ENCODE measurements at regions of chr16 and their contacts with region 1.

Region 1: DNA sequence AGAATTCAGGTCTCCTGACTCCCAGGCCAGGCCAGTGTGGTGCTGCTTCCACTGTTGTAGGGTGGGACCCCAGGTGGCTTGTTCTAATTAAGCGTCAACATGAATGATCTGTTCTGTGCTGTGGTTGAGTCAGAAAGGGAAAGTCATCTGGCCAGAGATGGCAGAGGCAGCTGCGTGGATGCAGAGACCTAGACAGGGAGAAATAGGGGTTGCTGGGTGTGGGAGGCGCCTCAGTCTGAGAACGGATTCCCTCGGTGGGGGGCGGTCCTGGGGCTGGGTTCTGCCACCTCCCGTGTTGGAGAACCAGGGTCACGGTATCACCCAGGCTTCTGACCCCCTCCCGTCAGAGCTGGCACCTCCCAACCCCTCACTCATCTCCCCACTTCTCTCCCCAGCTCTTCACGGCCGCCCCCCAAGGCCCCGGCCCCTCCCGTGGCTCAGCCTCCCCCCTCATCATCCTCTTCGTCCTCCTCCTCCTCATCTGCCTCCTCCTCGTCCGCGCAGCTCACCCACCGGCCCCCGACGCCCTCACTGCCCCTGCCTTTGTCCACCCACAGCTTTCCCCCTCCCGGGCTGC is 5.7 kb downstream of the FBRS start:
- DNase-seq: no peak
- ATAC-seq: no peak
- H3K4me3 ChIP-seq: no peak overlapping the region
- H3K27ac ChIP-seq: no peak overlapping the region
- H3K4me1 ChIP-seq: peaks cover 0 to 40% (median 34%) of the 10 kb centered on the region in 12 donors
- H3K27me3 ChIP-seq: no peaks in the 10 kb centered on the region
- CTCF ChIP-seq: no peak
- POLR2A ChIP-seq: no peak

Region 2: DNA sequence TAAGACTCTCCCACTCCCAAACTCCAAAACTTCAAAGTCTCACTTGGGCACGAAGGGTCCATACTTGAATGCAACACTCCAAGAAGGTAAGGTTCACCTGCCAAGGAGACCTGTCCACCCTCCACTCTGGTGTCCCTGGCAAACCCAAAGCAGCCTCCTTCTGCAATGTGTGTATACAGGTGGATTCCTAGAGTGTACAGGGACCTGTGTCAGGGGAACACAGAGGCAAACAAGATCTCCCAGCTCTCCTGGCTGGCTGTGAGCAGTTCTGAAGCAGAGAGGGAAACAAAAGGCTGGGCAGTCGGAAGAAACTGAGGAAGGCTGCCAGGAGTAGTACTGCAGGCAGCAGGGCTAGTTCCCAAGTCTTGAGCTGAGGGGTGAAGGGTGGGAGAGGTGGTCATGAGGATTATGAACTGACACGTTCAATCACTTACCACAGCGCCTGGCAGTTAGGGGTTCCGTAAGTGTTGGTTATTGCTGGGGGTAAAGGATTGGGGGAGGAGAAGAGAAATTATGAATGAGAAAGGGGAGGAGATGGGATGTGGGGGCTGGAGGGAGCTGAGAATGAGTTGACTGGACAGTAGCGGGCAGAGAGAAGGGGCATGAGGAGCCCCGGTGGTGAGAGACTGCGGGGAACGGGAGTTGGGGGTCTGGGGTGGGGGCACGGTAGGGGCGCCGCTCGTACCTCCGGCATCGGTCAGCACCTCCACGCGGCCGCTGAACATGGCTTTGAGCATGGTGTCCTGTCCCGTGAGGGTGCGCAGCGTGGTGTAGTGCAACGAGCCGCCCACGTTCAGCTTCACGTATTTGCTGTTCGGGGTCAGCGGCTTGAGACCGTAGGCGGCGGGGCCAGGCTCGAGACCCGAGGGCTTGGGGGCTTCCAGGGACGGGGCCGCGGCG is 738.6 kb before region 1 on chr16:
- intact Hi-C with region 1: no loop called
- DNase-seq: peak in 3 of 5 donors; percentile 44 to 69 (median 57)
- ATAC-seq: peak in 2 of 4 donors; percentile 48 to 55
- H3K4me3 ChIP-seq: peak overlapping the region; percentile 72 to 100 (median 92)
- H3K27ac ChIP-seq: peak overlapping the region in 11 of 12 donors; percentile 72 to 96 (median 88)
- H3K4me1 ChIP-seq: peaks cover 4 to 27% (median 18%) of the 10 kb centered on the region in 12 donors
- H3K27me3 ChIP-seq: no peaks in the 10 kb centered on the region
- CTCF ChIP-seq: no peak
- POLR2A ChIP-seq: no peak

Region 3: DNA sequence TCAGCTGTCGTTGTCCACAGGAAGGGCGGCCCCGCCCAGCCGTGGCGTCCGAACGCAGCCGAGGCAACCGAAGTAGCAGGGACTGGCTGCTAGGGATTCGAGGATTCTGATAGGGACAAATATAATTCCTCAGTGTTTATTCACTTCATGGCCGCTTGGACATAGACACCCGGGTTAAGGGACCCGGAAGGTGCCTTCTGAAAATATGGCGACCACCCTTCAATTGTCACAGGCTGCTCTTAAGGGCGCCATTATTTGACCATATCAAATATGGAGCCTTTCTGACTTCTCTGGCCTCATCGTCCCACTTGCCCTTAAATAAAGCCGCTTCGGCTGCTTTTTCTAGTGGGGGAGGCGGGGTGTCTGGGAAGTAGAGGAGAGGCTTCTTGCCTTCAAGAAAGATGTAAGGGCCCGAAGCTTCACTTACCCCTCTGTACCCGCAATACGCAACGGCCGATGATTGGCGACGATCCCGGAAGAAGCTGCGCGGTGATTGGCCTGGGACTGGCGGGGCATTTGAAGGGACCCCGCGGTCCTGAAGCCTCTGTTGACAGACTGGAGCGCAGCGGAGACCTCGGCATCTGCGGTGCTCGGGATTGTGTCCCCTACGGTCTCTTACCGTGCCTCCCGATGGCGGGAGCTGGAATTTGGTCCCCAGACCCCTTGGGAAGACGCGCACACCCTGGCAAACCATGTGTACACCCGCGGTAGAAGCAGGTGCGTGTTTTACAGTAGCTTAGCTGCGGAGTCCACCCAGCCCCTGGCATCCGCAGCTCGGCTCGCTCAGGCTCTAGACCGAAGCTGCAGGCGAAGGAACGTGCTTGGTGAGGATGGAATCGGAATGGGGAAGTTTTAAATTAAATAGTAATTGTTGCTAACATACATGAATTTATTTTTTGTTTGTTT is 92.0 kb before region 1 on chr16 and contains the start of gene ZNF688:
- intact Hi-C with region 1: no loop called
- DNase-seq: peak; percentile 95 to 96 (median 96)
- ATAC-seq: peak; percentile 90 to 95 (median 92)
- H3K4me3 ChIP-seq: peak within 1 kb of the TSS; percentile 49 to 99 (median 83)
- H3K27ac ChIP-seq: peak within 1 kb of the TSS; percentile 88 to 100 (median 98)
- H3K4me1 ChIP-seq: peaks cover 3 to 41% (median 20%) of the 10 kb centered on the region in 12 donors
- H3K27me3 ChIP-seq: no peaks in the 10 kb centered on the region
- CTCF ChIP-seq: no peak
- POLR2A ChIP-seq: peak in 1 of 2 donors; percentile 44
- total RNA-seq, gene ZNF688: 10.0 to 14.3 (median 11.6) TPM

Region 4: GRCh38 chr16:30692381-30693064 is 28.6 kb after region 1 on chr16:
- intact Hi-C with region 1: loop called in 4 of 10 experiments (anchors 2 to 5 kb)
- DNase-seq: no peak
- ATAC-seq: no peak
- H3K4me3 ChIP-seq: no peak overlapping the region
- H3K27ac ChIP-seq: no peak overlapping the region
- H3K4me1 ChIP-seq: peaks cover 0 to 19% (median 2%) of the 10 kb centered on the region in 12 donors
- H3K27me3 ChIP-seq: no peaks in the 10 kb centered on the region
- CTCF ChIP-seq: no peak
- POLR2A ChIP-seq: no peak

Region 5: GRCh38 chr16:30707421-30707820 is 43.5 kb after region 1 on chr16:
- intact Hi-C with region 1: no loop called
- DNase-seq: no peak
- ATAC-seq: no peak
- H3K4me3 ChIP-seq: no peak overlapping the region
- H3K27ac ChIP-seq: no peak overlapping the region
- H3K4me1 ChIP-seq: peaks cover 0 to 2% (median 0%) of the 10 kb centered on the region in 12 donors
- H3K27me3 ChIP-seq: no peaks in the 10 kb centered on the region
- CTCF ChIP-seq: no peak
- POLR2A ChIP-seq: no peak